ENCODE measurements at regions of chr11 and their contacts with region 1.

Region 1: GRCh38 chr11:130390071-130390758 is 38.2 kb downstream of the ADAMTS8 start:
- DNase-seq: peak; percentile 99
- ATAC-seq: peak; percentile 88
- H3K4me3 ChIP-seq: no peak overlapping the region
- H3K27ac ChIP-seq: peak overlapping the region; percentile 68; the same call in 1 of the 2 replicates
- H3K4me1 ChIP-seq: peaks cover 12% of the 10 kb centered on the region
- H3K27me3 ChIP-seq: peaks cover 32% of the 10 kb centered on the region
- CTCF ChIP-seq: peak; percentile 89
- POLR2A ChIP-seq: 0 out of 2 replicates have a peak, but pooled peaks have one; percentile 29
- RAD21 ChIP-seq: peak; percentile 86

Region 2: GRCh38 chr11:130269326-130269943 is 120.8 kb before region 1 on chr11:
- CTCF ChIA-PET with region 1: no interaction called
- POLR2A ChIA-PET with region 1: no interaction called
- dilution Hi-C with region 1: no loop called
- in situ Hi-C with region 1: no loop called
- intact Hi-C with region 1: no loop called
- DNase-seq: no peak
- ATAC-seq: no peak
- H3K4me3 ChIP-seq: no peak overlapping the region
- H3K27ac ChIP-seq: no peak overlapping the region
- H3K4me1 ChIP-seq: no peaks in the 10 kb centered on the region
- H3K27me3 ChIP-seq: no peaks in the 10 kb centered on the region
- CTCF ChIP-seq: no peak
- POLR2A ChIP-seq: no peak
- RAD21 ChIP-seq: no peak

Region 3: DNA sequence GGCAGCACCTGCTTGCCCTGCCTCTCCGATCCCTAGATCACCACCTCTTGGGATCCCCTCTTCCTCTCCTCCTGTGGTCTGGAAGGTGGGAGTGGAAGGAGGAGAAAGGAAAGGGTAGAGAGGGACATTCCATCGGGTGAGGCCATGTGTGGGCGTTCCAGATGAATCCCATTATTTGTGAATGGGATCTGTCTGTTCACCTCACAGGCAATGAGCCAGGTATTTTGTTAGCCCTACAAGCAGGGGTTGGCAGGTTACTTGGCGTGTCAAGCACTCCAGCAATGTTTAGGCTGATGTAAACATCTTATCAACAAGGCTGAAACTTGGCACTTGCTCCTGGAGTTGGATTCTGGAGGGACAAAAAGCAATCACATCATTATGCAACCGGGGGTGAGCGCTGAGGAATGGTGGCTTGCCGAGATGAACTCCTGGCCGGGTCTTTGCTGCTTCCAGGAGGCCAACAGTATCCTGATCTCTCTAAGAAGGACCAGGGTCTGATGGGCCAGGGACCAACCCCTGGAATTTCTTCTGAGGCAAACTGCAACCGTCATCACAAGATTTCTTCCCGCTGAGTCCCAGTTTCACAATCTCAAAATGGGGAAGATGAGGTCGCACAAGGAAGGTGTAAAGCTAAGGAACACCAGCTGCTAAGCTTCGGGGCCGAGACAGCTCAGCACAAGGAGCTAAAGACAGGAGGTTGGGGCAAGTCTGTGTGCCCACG is 30.4 kb after region 1 on chr11:
- CTCF ChIA-PET with region 1: interaction called, 6 read pairs
- POLR2A ChIA-PET with region 1: interaction called, 3 read pairs
- dilution Hi-C with region 1: no loop called
- in situ Hi-C with region 1: no loop called
- intact Hi-C with region 1: loop called (anchors 1 kb)
- DNase-seq: peak; percentile 82
- ATAC-seq: peak; percentile 65
- H3K4me3 ChIP-seq: no peak overlapping the region
- H3K27ac ChIP-seq: peak overlapping the region; percentile 93
- H3K4me1 ChIP-seq: peaks cover 30% of the 10 kb centered on the region
- H3K27me3 ChIP-seq: peaks cover 20% of the 10 kb centered on the region
- CTCF ChIP-seq: no peak
- POLR2A ChIP-seq: no peak
- RAD21 ChIP-seq: no peak

Region 4: DNA sequence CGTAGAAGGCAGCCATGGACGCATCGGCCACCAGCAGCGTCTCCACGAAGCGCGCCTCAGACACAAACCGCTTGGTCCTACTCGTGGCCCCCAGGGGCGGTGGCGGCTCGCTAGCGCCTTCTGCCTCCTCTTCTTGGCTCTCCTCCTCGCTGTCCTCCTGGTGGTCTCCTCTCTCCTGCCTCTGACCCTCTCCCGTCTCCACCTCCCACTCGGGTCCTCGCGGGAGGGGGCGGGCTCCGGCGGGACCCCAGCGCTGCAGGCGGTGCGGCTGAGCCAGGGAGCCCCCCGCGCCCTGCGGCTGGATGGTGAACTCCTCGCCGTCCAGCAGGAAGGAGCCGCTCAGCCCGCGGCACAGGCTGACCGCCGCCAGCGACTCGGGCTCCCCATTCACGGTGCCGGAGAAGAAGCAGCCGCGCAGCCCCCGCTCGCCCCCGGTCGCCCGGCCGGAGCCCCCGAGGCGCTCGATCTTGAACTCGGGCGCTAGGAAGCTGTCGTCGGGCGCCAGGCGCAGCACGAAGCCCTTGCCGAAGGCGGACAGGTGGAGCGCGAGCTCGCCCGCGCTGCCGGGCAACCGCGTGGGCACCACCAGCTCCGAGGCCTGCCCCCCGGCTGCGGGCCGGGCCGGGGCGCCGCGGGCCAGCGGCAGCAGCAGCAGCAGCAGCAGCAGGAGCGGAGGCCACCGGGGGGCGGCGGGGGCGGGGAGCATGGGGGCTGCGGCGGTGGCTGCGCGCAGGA is 37.5 kb after region 1 on chr11:
- CTCF ChIA-PET with region 1: interaction called, 8 read pairs
- POLR2A ChIA-PET with region 1: interaction called, 3 read pairs
- dilution Hi-C with region 1: no loop called
- in situ Hi-C with region 1: no loop called
- intact Hi-C with region 1: loop called (anchors 1 kb)
- DNase-seq: no peak
- ATAC-seq: peak; percentile 25
- H3K4me3 ChIP-seq: peak overlapping the region; percentile 47
- H3K27ac ChIP-seq: peak overlapping the region; percentile 1; the same call in 1 of the 2 replicates
- H3K4me1 ChIP-seq: peaks cover 6% of the 10 kb centered on the region; the same call in 1 of the 2 replicates
- H3K27me3 ChIP-seq: peaks cover 65% of the 10 kb centered on the region
- CTCF ChIP-seq: peak; percentile 33
- POLR2A ChIP-seq: no peak
- RAD21 ChIP-seq: peak; percentile 47